Activated CD4-positive, alpha-beta T cell treated with anti-CD3 and anti-CD28 coated beads for 36 hours (primary cell): ENCODE measurements at regions of chr20 and their contacts with region 1.

Region 1: DNA sequence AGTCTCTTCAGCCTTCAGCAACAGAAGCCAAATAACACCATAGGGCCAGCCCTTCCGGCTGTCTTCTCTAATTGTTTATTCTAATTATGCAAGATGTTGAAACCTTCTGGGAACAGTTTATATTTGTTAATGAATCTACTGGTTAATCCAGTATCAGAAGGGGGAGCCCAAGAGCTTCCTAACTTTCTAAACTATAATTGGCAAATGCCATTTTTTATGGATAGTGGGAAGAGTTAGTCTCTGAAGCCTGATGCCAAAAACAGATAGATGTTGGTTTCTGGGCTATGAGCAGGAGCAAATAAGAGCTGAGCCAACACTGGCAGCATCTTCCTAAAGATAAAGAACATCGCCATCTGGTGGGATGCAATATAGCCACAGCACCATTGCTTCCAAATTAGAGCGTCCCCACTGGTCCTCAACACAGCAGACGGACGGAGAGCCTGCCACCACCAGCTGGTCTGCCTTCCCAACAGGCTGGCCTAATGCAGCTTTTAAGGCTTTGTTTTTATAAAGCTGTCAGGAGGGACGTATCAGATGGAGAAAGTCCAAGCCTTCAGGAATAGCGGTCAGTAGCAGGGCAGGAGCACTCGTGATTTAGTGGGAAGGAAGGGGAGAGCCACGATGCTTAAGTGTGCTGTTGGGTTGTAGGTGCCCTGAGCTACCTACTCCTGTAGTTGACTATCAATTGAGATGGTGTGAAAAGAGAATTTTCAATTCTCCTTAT is 118.8 kb downstream of the RALGAPA2 start:
- DNase-seq: peak; percentile 40
- ATAC-seq: peak; percentile 53
- H3K4me3 Mint-ChIP-seq: no peak overlapping the region
- H3K27ac Mint-ChIP-seq: no peak overlapping the region
- H3K4me1 Mint-ChIP-seq: no peaks in the 10 kb centered on the region
- H3K27me3 Mint-ChIP-seq: no peaks in the 10 kb centered on the region

Region 2: DNA sequence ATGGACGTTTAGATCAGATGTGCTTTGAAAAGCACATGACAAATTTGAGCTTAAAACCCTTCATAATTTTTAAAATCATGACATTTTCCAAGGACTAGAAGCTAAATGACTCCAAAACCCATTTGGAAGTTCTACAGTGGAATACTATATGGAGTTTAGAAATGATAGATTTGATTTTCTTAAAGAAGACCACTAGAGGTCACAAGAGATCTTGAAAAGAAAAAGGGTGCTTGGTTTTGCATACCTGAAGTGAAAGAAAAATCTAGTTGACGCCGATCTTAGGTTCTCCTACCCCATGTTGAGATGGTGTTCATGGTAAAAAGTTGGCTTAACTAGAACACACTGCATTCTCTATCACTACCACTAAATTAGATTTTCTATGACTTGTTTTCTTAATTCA is 509.8 kb before region 1 on chr20:
- CTCF ChIA-PET with region 1: interaction called, 14 read pairs
- POLR2A ChIA-PET with region 1: no interaction called
- intact Hi-C with region 1: loop called (anchors 1 to 2 kb)
- DNase-seq: no peak
- ATAC-seq: peak; percentile 44
- H3K4me3 Mint-ChIP-seq: no peak overlapping the region
- H3K27ac Mint-ChIP-seq: no peak overlapping the region
- H3K4me1 Mint-ChIP-seq: peaks cover 2% of the 10 kb centered on the region
- H3K27me3 Mint-ChIP-seq: peaks cover 10% of the 10 kb centered on the region

Region 3: GRCh38 chr20:20130399-20130798 is 463.2 kb before region 1 on chr20:
- CTCF ChIA-PET with region 1: no interaction called
- POLR2A ChIA-PET with region 1: no interaction called
- intact Hi-C with region 1: loop called in 1 of 2 experiments (anchors 1 kb)
- DNase-seq: no peak
- ATAC-seq: no peak
- H3K4me3 Mint-ChIP-seq: no peak overlapping the region
- H3K27ac Mint-ChIP-seq: no peak overlapping the region
- H3K4me1 Mint-ChIP-seq: no peaks in the 10 kb centered on the region
- H3K27me3 Mint-ChIP-seq: peaks cover 27% of the 10 kb centered on the region

Region 4: GRCh38 chr20:20580139-20580538 is 13.5 kb before region 1 on chr20:
- CTCF ChIA-PET with region 1: interaction called, 11 read pairs
- POLR2A ChIA-PET with region 1: no interaction called
- intact Hi-C with region 1: no loop called
- DNase-seq: no peak
- ATAC-seq: no peak
- H3K4me3 Mint-ChIP-seq: no peak overlapping the region
- H3K27ac Mint-ChIP-seq: no peak overlapping the region
- H3K4me1 Mint-ChIP-seq: peaks cover 5% of the 10 kb centered on the region
- H3K27me3 Mint-ChIP-seq: no peaks in the 10 kb centered on the region